Psoas muscle (tissue), 8 donors: ENCODE measurements at regions of chr6 and their contacts with region 1.

Region 1: GRCh38 chr6:10722820-10723566 is at the start of gene TMEM14C:
- DNase-seq: peak; percentile 100
- ATAC-seq: peak; percentile 98 to 99 (median 98)
- H3K4me3 ChIP-seq: peak within 1 kb of the TSS; percentile 86
- H3K27ac ChIP-seq: peak within 1 kb of the TSS; percentile 93
- H3K4me1 ChIP-seq: peaks cover 22% of the 10 kb centered on the region
- H3K27me3 ChIP-seq: no peaks in the 10 kb centered on the region
- CTCF ChIP-seq: no peak
- total RNA-seq, gene TMEM14C: 74.3 to 90.7 (median 86.7) TPM

Region 2: GRCh38 chr6:10310826-10311225 is 412.2 kb before region 1 on chr6:
- intact Hi-C with region 1: no loop called
- DNase-seq: no peak
- ATAC-seq: no peak
- H3K4me3 ChIP-seq: no peak overlapping the region
- H3K27ac ChIP-seq: no peak overlapping the region
- H3K4me1 ChIP-seq: no peaks in the 10 kb centered on the region
- H3K27me3 ChIP-seq: peaks cover 0 to 4% (median 2%) of the 10 kb centered on the region in 3 donors
- CTCF ChIP-seq: no peak

Region 3: DNA sequence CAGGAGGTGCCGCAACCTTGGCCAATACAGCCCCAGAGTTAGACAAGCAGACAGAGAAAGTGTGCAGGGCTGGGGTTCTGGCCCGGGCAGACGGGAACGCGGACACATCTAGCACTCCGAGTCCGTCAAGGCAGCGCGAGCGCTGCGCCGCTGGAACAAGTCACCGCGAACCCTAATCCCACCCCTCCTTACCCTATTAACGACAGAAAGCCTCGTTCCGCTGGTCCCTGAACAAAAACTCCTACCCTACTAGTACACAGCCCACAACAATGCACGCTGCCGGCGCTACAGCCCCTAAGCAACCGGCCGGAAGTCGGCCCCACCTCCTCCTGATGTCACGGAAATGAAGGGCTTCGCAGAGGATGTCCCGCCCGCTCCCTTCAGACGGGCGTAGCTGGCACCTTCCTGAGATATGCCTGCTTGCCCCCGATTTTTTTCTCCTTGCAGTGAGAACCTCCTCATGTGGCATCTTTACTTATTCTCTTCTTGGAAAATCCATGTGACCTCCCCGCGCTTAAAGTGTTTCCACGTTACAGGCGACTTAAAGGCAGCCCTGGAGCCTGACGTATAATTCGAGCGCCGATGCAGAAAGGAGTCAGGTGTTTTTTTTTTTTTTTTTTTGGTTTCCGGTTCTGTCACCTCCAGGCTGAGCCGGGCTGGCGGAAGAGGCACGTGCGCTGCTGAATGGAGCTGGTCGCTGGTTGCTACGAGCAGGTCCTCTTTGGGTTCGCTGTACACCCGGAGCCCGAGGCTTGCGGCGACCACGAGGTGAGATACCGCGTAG is 28.5 kb before region 1 on chr6 and contains the starts of genes C6orf52 and PAK1IP1:
- intact Hi-C with region 1: loop called (anchors 1 to 2 kb)
- DNase-seq: peak; percentile 92 to 96
- ATAC-seq: peak; percentile 98 to 99 (median 99)
- H3K4me3 ChIP-seq: peak within 1 kb of the TSS; percentile 89
- H3K27ac ChIP-seq: peak within 1 kb of the TSS; percentile 88
- H3K4me1 ChIP-seq: peaks cover 27% of the 10 kb centered on the region
- H3K27me3 ChIP-seq: no peaks in the 10 kb centered on the region
- CTCF ChIP-seq: no peak
- total RNA-seq, gene C6orf52: 0.61 to 1.5 (median 1.0) TPM
- total RNA-seq, gene PAK1IP1: 9.5 to 22.6 (median 18.3) TPM

Region 4: GRCh38 chr6:10747251-10747972 is 24.4 kb after region 1 on chr6 and contains the start of gene TMEM14B:
- intact Hi-C with region 1: loop called (anchors 1 to 2 kb)
- DNase-seq: peak; percentile 100
- ATAC-seq: peak; percentile 99 to 100 (median 100)
- H3K4me3 ChIP-seq: peak within 1 kb of the TSS; percentile 74
- H3K27ac ChIP-seq: peak within 1 kb of the TSS; percentile 83
- H3K4me1 ChIP-seq: peaks cover 22% of the 10 kb centered on the region
- H3K27me3 ChIP-seq: no peaks in the 10 kb centered on the region
- CTCF ChIP-seq: no peak
- total RNA-seq, gene TMEM14B: 78.2 to 89.1 (median 81.8) TPM